H1 (cell line): ENCODE measurements at regions of chr1 and their contacts with region 1.

Region 1: GRCh38 chr1:156927215-156928042 is 7.0 kb downstream of the LRRC71 start:
- DNase-seq: peak in 1 of 2 experiments; percentile 90
- H3K4me3 ChIP-seq: peak overlapping the region; percentile 36 to 70 (median 62)
- H3K27ac ChIP-seq: no peak overlapping the region
- H3K4me1 ChIP-seq: peaks cover 3 to 21% (median 9%) of the 10 kb centered on the region in 4 experiments; a peak in 6 of 7 replicates
- H3K27me3 ChIP-seq: peaks cover 51 to 71% (median 69%) of the 10 kb centered on the region in 4 experiments
- CTCF ChIP-seq: peak; percentile 90 to 92 (median 92)
- EP300 ChIP-seq: no peak
- POLR2A ChIP-seq: no peak
- RAD21 ChIP-seq: peak; percentile 88 to 93

Region 2: DNA sequence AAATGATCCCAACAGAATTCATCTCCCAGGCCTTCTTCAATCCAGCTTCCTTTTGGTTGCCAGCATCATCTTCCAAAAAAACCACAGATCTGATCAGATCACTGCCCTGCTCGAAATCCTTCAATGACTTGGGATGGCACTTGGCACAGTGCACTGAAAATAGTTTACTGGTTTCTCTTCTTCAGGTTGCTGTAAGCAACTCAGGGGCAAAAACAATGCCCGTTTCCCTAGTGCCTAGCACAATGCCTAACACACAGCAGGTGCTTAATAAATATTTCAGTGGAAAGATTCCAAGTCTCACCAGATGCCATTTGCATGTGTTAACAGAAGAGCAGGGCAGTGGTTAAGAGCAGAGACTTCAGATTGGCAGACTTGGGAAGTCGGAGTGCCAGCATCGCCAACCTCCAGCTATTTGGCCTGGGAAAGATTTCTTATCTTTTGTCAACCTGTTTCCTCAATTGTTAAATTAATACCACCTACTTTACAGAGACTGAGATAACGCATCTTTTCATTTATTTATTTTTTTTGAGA is 210.1 kb before region 1 on chr1:
- CTCF ChIA-PET with region 1: no interaction called
- POLR2A ChIA-PET with region 1: no interaction called
- DNase-seq: no peak
- H3K4me3 ChIP-seq: no peak overlapping the region
- H3K27ac ChIP-seq: no peak overlapping the region
- H3K4me1 ChIP-seq: peaks cover 2 to 8% (median 4%) of the 10 kb centered on the region in 4 experiments; a peak in 4 of 7 replicates
- H3K27me3 ChIP-seq: no peaks in the 10 kb centered on the region
- CTCF ChIP-seq: no peak
- EP300 ChIP-seq: no peak
- POLR2A ChIP-seq: no peak
- RAD21 ChIP-seq: no peak

Region 3: GRCh38 chr1:156886583-156887281 is 40.7 kb before region 1 on chr1:
- CTCF ChIA-PET with region 1: interaction called, 287 read pairs
- POLR2A ChIA-PET with region 1: interaction called, 10 read pairs
- DNase-seq: no peak
- H3K4me3 ChIP-seq: no peak overlapping the region; a peak in 1 of 8 replicates
- H3K27ac ChIP-seq: no peak overlapping the region
- H3K4me1 ChIP-seq: peaks cover 8 to 34% (median 16%) of the 10 kb centered on the region in 4 experiments
- H3K27me3 ChIP-seq: peaks cover 0 to 35% (median 31%) of the 10 kb centered on the region in 4 experiments; a peak in 6 of 7 replicates
- CTCF ChIP-seq: no peak
- EP300 ChIP-seq: no peak
- POLR2A ChIP-seq: no peak
- RAD21 ChIP-seq: no peak

Region 4: GRCh38 chr1:157124855-157125254 is 197.4 kb after region 1 on chr1:
- CTCF ChIA-PET with region 1: no interaction called
- POLR2A ChIA-PET with region 1: no interaction called
- DNase-seq: no peak
- H3K4me3 ChIP-seq: no peak overlapping the region
- H3K27ac ChIP-seq: no peak overlapping the region
- H3K4me1 ChIP-seq: peaks cover 0 to 6% (median 0%) of the 10 kb centered on the region in 4 experiments; a peak in 1 of 7 replicates
- H3K27me3 ChIP-seq: no peaks in the 10 kb centered on the region
- CTCF ChIP-seq: peak in 2 of 3 experiments; percentile 30 to 31; a peak in 2 of 4 replicates
- EP300 ChIP-seq: no peak
- POLR2A ChIP-seq: no peak
- RAD21 ChIP-seq: no peak; a peak in 1 of 4 replicates